Activated CD4-positive, alpha-beta memory T cell treated with anti-CD3 and anti-CD28 coated beads for 36 hours (primary cell): ENCODE measurements at regions of chr11 and their contacts with region 1.

Region 1: DNA sequence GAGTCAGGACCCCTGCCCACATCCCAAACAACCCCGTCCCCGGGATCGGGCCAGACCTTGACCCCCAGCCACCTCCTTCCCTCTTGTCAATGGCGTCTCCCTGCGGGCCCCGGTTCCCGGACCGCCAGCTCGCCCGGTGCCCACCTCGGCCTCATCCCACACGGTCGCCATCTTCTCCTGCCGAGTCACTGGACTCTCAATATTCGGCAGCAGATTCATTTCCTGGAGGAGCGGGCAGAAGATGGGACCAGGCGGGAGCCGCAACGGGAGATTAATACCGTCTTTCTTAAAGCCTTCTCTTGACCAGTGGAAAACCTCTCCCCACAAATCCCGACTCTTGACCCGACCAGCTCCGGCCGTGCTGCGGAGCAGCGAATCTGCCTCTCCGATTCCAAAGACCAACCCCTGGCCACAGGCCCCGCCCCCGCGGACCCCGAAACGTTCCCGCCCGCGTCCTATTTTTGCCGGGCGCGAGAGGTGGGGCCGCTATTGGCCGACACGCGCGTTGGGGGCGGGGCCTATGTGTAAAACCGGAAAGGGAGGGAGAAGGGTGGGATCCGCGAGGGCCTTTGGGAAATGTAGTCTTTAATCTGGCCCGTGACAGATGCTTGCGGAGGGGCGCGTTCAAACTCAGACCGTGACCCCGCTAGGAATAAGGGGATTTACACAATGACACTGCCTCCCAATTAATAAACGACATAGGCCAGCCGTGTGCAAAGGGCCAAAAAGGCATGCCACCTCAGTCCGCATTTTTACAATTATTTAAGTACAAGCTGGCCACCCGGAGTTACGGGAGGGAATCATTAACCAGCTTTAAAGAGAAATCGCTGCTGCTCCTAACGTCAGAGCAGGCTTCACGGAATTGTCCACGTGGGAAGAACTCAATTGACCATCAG is at the start of gene PSMC3:
- DNase-seq: peak; percentile 99
- H3K4me3 Mint-ChIP-seq: peak within 1 kb of the TSS; percentile 100
- H3K27ac Mint-ChIP-seq: peak within 1 kb of the TSS; percentile 95
- H3K4me1 Mint-ChIP-seq: peaks cover 26% of the 10 kb centered on the region
- H3K27me3 Mint-ChIP-seq: no peaks in the 10 kb centered on the region
- total RNA-seq, gene PSMC3: 143 to 148 TPM

Region 2: DNA sequence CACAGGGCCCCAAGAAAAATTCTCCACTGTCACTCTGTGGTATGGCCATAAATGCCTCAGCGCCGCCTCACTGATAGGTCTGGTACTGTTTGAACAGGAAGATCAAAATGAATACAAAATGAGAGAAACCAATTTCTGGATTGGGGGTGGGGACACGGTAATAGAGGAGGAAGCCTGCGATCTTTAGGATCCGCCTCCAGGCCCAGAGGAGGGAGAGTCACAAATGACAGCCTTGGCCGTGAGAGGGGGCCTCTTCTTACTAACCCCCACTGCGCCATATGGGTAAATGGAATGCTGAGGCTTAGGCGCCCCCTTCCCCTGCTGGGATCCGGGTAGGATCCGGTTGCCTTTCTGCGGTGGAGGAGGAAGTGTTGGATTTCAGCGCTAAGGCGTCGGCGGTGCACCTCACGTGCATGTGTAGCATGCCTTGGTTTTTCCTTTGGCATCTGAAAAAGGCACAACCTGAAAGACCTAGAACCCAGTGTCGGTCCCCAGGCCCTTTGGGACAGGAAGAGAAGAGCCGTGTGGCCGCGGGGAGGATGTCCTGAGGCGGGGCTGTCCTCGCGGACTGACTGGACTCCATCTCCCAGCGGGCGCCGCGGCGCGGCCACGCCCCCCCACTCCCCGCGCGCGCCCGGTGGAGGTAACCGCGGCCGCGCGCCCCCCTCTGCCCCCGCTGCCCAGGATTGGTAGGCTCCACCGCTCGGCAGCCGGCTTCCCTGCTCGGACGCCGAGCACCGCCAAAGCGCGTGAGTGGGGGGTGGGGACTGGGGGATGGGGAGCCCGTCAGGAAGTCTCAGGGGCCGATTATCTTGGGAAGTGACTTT is 157.1 kb before region 1 on chr11:
- CTCF ChIA-PET with region 1: no interaction called
- POLR2A ChIA-PET with region 1: no interaction called
- intact Hi-C with region 1: loop called (anchors 1 kb)
- DNase-seq: peak; percentile 90
- H3K4me3 Mint-ChIP-seq: peak overlapping the region; percentile 84
- H3K27ac Mint-ChIP-seq: peak overlapping the region; percentile 99
- H3K4me1 Mint-ChIP-seq: peaks cover 44% of the 10 kb centered on the region
- H3K27me3 Mint-ChIP-seq: no peaks in the 10 kb centered on the region

Region 3: GRCh38 chr11:47373876-47374720 is 52.2 kb before region 1 on chr11:
- CTCF ChIA-PET with region 1: interaction called, 11 read pairs
- POLR2A ChIA-PET with region 1: no interaction called
- intact Hi-C with region 1: no loop called
- DNase-seq: peak; percentile 88
- H3K4me3 Mint-ChIP-seq: no peak overlapping the region
- H3K27ac Mint-ChIP-seq: peak overlapping the region; percentile 23
- H3K4me1 Mint-ChIP-seq: peaks cover 18% of the 10 kb centered on the region
- H3K27me3 Mint-ChIP-seq: no peaks in the 10 kb centered on the region

Region 4: DNA sequence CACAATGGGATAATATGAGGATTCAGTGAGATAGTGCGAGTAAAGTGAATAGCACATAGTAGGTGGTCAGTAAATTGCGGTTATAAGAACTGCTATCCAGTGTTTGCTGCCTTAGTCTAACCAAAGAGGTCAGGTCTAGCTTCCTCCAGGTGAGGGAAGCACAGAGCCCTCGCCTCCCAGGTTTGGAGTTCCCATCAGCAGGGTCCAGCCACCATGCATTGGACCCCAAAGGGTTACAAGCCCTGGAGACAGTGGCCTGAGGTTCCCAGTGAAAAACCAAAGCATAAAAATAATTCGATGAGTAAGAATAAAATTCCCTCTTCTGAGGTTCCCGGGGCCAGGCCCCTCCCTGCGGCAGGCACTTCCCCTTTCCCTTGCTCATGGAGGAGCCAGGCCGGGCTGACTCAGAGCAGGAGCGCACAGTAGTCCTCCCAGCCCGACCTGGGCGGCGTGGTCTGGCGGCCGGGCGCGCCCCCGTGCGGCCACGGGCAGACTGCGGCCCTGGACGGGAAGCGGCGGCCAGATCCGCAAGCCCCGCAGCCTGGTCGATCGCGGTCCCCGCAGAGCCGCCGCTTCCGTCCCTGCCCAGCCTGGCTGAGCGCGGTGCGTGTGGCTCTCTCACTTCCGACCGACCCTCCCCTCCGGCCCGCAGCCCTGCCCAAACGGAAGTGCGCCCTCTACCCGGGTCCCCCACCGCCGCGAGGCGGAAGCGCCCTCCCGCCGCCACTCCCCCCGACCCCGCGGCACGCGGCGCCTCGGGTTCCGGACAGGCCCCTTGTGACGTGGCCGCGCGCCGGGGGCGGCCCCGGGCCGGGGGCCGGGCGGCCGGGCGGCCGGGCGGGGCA is 18.3 kb before region 1 on chr11 and contains the start of gene SLC39A13:
- CTCF ChIA-PET with region 1: interaction called, 59 read pairs
- POLR2A ChIA-PET with region 1: interaction called, 9 read pairs
- intact Hi-C with region 1: loop called (anchors 1 kb)
- DNase-seq: peak; percentile 95
- H3K4me3 Mint-ChIP-seq: peak within 1 kb of the TSS; percentile 86
- H3K27ac Mint-ChIP-seq: peak within 1 kb of the TSS; percentile 95
- H3K4me1 Mint-ChIP-seq: peaks cover 17% of the 10 kb centered on the region
- H3K27me3 Mint-ChIP-seq: no peaks in the 10 kb centered on the region
- total RNA-seq, gene SLC39A13: 17.7 to 18.0 TPM

Region 5: GRCh38 chr11:47454180-47454644 is 27.9 kb after region 1 on chr11:
- CTCF ChIA-PET with region 1: no interaction called
- POLR2A ChIA-PET with region 1: no interaction called
- intact Hi-C with region 1: loop called (anchors 1 kb)
- DNase-seq: peak; percentile 77
- H3K4me3 Mint-ChIP-seq: no peak overlapping the region
- H3K27ac Mint-ChIP-seq: no peak overlapping the region
- H3K4me1 Mint-ChIP-seq: no peaks in the 10 kb centered on the region
- H3K27me3 Mint-ChIP-seq: no peaks in the 10 kb centered on the region

Region 6: GRCh38 chr11:47578524-47579460 is 152.5 kb after region 1 on chr11 and contains the starts of genes KBTBD4 and NDUFS3:
- CTCF ChIA-PET with region 1: no interaction called
- POLR2A ChIA-PET with region 1: no interaction called
- intact Hi-C with region 1: loop called (anchors 5 kb)
- DNase-seq: peak; percentile 93
- H3K4me3 Mint-ChIP-seq: peak within 1 kb of the TSS; percentile 94
- H3K27ac Mint-ChIP-seq: peak within 1 kb of the TSS; percentile 93
- H3K4me1 Mint-ChIP-seq: peaks cover 32% of the 10 kb centered on the region
- H3K27me3 Mint-ChIP-seq: peaks cover 1% of the 10 kb centered on the region
- total RNA-seq, gene KBTBD4: 18.7 to 18.8 TPM
- total RNA-seq, gene NDUFS3: 94.0 to 94.4 TPM

Region 7: DNA sequence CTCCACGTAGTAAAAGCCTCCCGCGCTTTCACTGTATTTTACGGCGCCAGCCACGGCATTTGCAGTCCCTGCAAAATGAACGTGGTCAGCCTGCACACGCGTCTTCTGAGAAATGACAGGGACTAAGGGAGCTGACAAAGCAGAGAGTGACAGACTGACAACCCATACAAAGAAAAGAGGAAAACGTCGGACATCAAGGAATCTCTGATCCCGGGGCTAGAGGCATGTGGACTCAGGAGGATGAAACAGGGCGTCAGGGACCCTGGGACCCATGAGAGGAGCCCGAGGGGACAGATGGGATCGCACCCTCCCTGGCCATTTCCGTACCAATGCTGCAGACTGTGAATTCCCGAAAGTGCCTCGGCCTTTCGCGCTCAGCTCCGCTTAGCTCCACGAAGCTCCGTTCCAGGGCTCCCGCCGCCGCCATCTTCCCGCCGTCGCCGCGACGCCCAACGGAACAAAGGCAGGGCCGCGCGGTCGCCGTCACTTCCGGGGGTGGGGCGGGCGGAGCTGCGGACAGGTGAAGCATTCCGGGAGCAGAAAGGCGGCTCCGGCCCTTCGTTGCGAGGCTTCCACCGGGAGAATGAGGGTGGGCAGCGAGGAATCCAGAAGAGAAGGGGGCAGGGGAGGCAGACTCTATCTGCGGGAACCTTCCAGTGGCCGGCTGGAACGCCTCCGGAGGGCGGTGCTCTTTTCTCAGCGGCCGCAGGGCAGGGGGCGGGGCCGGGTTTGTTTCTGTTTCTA is 421.8 kb after region 1 on chr11 and contains the start of gene NUP160:
- CTCF ChIA-PET with region 1: no interaction called
- POLR2A ChIA-PET with region 1: no interaction called
- intact Hi-C with region 1: loop called (anchors 1 kb)
- DNase-seq: peak; percentile 92
- H3K4me3 Mint-ChIP-seq: peak within 1 kb of the TSS; percentile 98
- H3K27ac Mint-ChIP-seq: peak within 1 kb of the TSS; percentile 97
- H3K4me1 Mint-ChIP-seq: peaks cover 45% of the 10 kb centered on the region
- H3K27me3 Mint-ChIP-seq: no peaks in the 10 kb centered on the region
- total RNA-seq, gene NUP160: 68.0 to 69.5 TPM